PC-3 (cell line): ENCODE measurements at regions of chr10 and their contacts with region 1.

Region 1: DNA sequence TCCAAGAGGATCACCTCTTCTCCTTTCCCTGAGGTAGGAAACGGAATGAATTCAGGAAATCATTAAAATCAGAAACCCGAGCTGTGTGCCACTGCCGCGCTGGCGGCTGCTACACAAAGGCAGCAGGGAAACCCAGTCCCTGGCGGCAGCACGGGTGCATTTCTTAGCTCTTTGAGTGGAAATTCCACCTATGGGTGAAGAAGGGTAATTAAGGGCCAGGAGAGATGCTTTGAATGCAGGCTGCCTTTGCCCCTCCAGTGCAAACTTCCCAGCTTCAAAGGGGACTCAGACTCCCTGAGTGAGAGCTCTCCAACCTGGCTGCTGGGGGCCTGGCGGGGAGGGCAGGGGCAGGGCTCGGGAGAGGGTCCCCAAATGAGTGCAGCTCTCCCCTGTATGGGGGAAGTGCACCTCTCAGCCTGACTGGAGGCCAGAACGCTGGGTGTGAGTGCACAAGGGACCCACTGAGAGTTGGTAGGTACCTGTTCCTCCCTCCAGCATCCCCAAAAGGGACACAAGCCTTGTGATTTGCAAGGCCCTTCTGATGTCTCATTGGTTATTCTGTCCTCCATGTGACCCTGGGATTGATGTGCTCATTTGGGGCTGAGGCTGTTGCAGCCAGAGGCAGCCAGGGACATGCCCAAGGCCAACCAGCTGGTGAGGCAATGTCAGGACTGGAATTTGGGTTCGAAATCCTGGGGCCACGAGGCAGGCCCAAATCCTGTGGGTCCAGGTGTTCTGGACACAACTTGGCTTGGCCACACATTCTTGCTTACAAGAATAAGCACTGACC is 16.3 kb upstream of the ZMIZ1 start:
- DNase-seq: peak; percentile 89
- ATAC-seq: peak; percentile 75
- H3K4me3 ChIP-seq: no peak overlapping the region
- H3K27ac ChIP-seq: no peak overlapping the region
- H3K4me1 ChIP-seq: peaks cover 27% of the 10 kb centered on the region
- H3K27me3 ChIP-seq: no peaks in the 10 kb centered on the region
- CTCF ChIP-seq: peak; percentile 91

Region 2: GRCh38 chr10:78664929-78665553 is 387.4 kb before region 1 on chr10:
- CTCF ChIA-PET with region 1: no interaction called
- POLR2A ChIA-PET with region 1: no interaction called
- intact Hi-C with region 1: loop called (anchors 5 kb)
- DNase-seq: peak; percentile 98
- ATAC-seq: peak; percentile 86
- H3K4me3 ChIP-seq: no peak overlapping the region
- H3K27ac ChIP-seq: no peak overlapping the region
- H3K4me1 ChIP-seq: no peaks in the 10 kb centered on the region
- H3K27me3 ChIP-seq: peaks cover 34% of the 10 kb centered on the region
- CTCF ChIP-seq: peak; percentile 100

Region 3: GRCh38 chr10:78756604-78757349 is 295.7 kb before region 1 on chr10:
- CTCF ChIA-PET with region 1: no interaction called
- POLR2A ChIA-PET with region 1: no interaction called
- intact Hi-C with region 1: no loop called
- DNase-seq: peak; percentile 100
- ATAC-seq: peak; percentile 98
- H3K4me3 ChIP-seq: peak overlapping the region; percentile 4; the same call in 1 of the 2 replicates
- H3K27ac ChIP-seq: peak overlapping the region; percentile 73
- H3K4me1 ChIP-seq: peaks cover 28% of the 10 kb centered on the region
- H3K27me3 ChIP-seq: no peaks in the 10 kb centered on the region
- CTCF ChIP-seq: peak; percentile 39; the same call in 1 of the 2 replicates